ENCODE measurements at regions of chr16 and their contacts with region 1.

Region 1: GRCh38 chr16:9134739-9135138 is 43.3 kb downstream of the HAPSTR1 start:
- DNase-seq: peak; percentile 79
- ATAC-seq: peak; percentile 88
- H3K4me3 ChIP-seq: no peak overlapping the region
- H3K27ac ChIP-seq: no peak overlapping the region
- H3K4me1 ChIP-seq: peaks cover 27% of the 10 kb centered on the region
- H3K27me3 ChIP-seq: peaks cover 6 to 11% of the 10 kb centered on the region in 2 experiments; a peak in 3 of 5 replicates
- CTCF ChIP-seq: peak; percentile 98
- EP300 ChIP-seq: no peak
- POLR2A ChIP-seq: no peak
- RAD21 ChIP-seq: peak; percentile 95

Region 2: GRCh38 chr16:8572919-8573724 is 561.6 kb before region 1 on chr16:
- CTCF ChIA-PET with region 1: interaction called, 4 read pairs
- POLR2A ChIA-PET with region 1: no interaction called
- in situ Hi-C with region 1: no loop called
- intact Hi-C with region 1: loop called (anchors 10 kb)
- DNase-seq: peak; percentile 61
- ATAC-seq: peak; percentile 25
- H3K4me3 ChIP-seq: peak overlapping the region in 2 of 3 experiments; percentile 20 to 28; a peak in 3 of 6 replicates
- H3K27ac ChIP-seq: no peak overlapping the region
- H3K4me1 ChIP-seq: peaks cover 76% of the 10 kb centered on the region
- H3K27me3 ChIP-seq: peaks cover 0 to 18% of the 10 kb centered on the region in 2 experiments; a peak in 1 of 5 replicates
- CTCF ChIP-seq: peak; percentile 88
- EP300 ChIP-seq: 0 out of 4 replicates have a peak, but pooled peaks of 1 of the 2 experiments have one; percentile 41
- POLR2A ChIP-seq: no peak
- RAD21 ChIP-seq: peak; percentile 76; the same call in 1 of the 2 replicates

Region 3: GRCh38 chr16:8740775-8741355 is 393.9 kb before region 1 on chr16:
- CTCF ChIA-PET with region 1: no interaction called
- POLR2A ChIA-PET with region 1: no interaction called
- in situ Hi-C with region 1: no loop called
- intact Hi-C with region 1: loop called (anchors 10 kb)
- DNase-seq: peak; percentile 100
- ATAC-seq: peak; percentile 99
- H3K4me3 ChIP-seq: peak overlapping the region in 1 of 3 experiments; percentile 0; a peak in 1 of 6 replicates
- H3K27ac ChIP-seq: peak overlapping the region; percentile 48
- H3K4me1 ChIP-seq: peaks cover 34% of the 10 kb centered on the region
- H3K27me3 ChIP-seq: no peaks in the 10 kb centered on the region
- CTCF ChIP-seq: no peak
- EP300 ChIP-seq: peak in 1 of 2 experiments; percentile 86; a peak in 2 of 4 replicates
- POLR2A ChIP-seq: peak in 1 of 2 experiments; percentile 35; a peak in 1 of 4 replicates
- RAD21 ChIP-seq: peak; percentile 64

Region 4: GRCh38 chr16:8905168-8905762 is 229.5 kb before region 1 on chr16:
- CTCF ChIA-PET with region 1: interaction called, 8 read pairs
- POLR2A ChIA-PET with region 1: no interaction called
- in situ Hi-C with region 1: no loop called
- intact Hi-C with region 1: loop called (anchors 5 kb)
- DNase-seq: peak; percentile 59
- ATAC-seq: peak; percentile 81
- H3K4me3 ChIP-seq: no peak overlapping the region
- H3K27ac ChIP-seq: no peak overlapping the region
- H3K4me1 ChIP-seq: no peaks in the 10 kb centered on the region
- H3K27me3 ChIP-seq: no peaks in the 10 kb centered on the region
- CTCF ChIP-seq: peak; percentile 78
- EP300 ChIP-seq: no peak
- POLR2A ChIP-seq: no peak; a peak in 1 of 4 replicates
- RAD21 ChIP-seq: peak; percentile 70

Region 5: GRCh38 chr16:8936421-8936820 is 198.3 kb before region 1 on chr16:
- CTCF ChIA-PET with region 1: interaction called, 9 read pairs
- POLR2A ChIA-PET with region 1: no interaction called
- in situ Hi-C with region 1: no loop called
- intact Hi-C with region 1: loop called (anchors 10 kb)
- DNase-seq: peak; percentile 70
- ATAC-seq: peak; percentile 94
- H3K4me3 ChIP-seq: no peak overlapping the region
- H3K27ac ChIP-seq: no peak overlapping the region
- H3K4me1 ChIP-seq: peaks cover 64% of the 10 kb centered on the region
- H3K27me3 ChIP-seq: no peaks in the 10 kb centered on the region
- CTCF ChIP-seq: peak; percentile 79
- EP300 ChIP-seq: no peak
- POLR2A ChIP-seq: no peak
- RAD21 ChIP-seq: peak; percentile 45

Region 6: GRCh38 chr16:9225611-9226316 is 91.0 kb after region 1 on chr16:
- CTCF ChIA-PET with region 1: interaction called, 4 read pairs
- POLR2A ChIA-PET with region 1: no interaction called
- in situ Hi-C with region 1: no loop called
- intact Hi-C with region 1: loop called (anchors 1 kb)
- DNase-seq: peak; percentile 59
- ATAC-seq: peak; percentile 94
- H3K4me3 ChIP-seq: no peak overlapping the region
- H3K27ac ChIP-seq: no peak overlapping the region
- H3K4me1 ChIP-seq: no peaks in the 10 kb centered on the region
- H3K27me3 ChIP-seq: peaks cover 0 to 18% of the 10 kb centered on the region in 2 experiments; a peak in 3 of 5 replicates
- CTCF ChIP-seq: peak; percentile 75
- EP300 ChIP-seq: no peak
- POLR2A ChIP-seq: no peak
- RAD21 ChIP-seq: peak; percentile 39; the same call in 1 of the 2 replicates

Measured in HepG2 (cell line).